GM10248 (cell line): ENCODE measurements at regions of chr20 and their contacts with region 1.

Region 1: DNA sequence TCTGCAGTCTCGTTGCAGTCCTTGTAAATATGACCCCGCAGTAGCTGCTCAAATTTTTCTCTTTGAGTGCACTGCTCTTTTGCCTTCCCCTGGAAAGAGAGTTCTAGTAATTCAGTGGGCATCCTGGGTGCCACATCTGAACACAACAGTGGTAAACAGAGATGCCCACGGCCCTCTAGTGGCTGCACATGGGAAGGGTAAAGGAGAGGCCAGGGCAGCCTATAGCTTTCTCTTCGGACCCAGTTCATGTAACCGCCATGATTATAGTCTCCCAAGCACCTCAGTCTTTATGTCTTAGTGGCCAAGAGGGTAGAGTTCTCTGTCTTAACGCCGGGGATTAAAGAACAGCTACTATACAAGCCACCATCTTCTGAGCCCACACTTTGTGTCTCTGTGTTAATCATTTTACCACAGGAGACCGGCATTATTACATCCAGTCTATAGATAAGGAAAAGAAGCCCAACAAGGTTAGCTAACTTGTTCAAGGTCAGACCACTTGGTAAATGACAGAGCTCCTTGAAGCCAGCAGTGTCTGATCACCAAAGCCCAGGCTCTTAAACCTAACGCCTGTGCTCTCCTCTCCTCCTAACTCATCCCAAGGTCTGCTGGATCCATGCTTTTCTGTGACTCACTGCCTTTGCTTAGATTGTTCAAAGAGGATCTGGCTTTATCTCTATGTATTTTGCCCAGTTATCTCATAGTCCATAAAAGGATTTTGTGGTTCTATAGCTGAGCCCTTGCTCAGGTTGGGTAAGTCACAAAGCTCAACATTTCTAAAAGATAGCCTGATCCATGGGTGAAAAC is 81.8 kb downstream of the ISM1 start:
- DNase-seq: peak; percentile 50
- CTCF ChIP-seq: peak; percentile 54

Region 2: DNA sequence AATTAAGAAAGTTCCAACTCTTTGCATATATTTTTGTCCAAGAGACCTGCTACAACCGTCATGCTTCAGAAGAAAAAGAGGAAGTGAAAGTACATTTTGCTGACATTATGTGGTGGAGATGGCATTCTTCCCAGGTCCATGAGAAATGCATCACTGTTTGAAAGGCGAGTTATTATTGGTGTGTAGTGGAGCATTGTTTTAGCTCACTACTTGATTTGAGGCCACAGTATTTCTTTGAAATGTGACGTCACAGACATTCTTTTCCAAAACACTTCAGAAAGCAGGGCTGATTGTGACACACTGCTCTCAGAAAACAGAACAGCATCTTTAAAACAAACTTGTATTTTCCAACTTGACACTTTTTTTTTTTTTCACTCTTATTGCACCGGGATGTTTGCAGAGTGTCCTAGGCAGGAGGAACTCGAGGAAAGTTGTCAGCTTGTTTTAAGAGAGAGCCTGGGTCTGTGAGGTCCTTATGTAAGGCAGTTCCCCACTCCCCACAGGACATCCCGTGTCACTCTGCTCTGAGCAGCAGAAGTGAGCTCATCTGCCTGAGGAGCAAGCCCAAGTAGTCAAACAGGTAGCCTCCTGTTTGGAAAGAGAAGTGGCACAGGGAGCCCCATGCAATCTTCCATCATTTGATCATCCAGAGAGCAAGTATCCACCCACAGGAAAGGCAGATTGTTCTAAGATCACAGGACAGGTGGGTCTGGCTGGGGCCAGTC is 293.0 kb before region 1 on chr20:
- CTCF ChIA-PET with region 1: no interaction called
- POLR2A ChIA-PET with region 1: no interaction called
- DNase-seq: peak; percentile 36
- CTCF ChIP-seq: no peak

Region 3: GRCh38 chr20:13231031-13231752 is 71.7 kb before region 1 on chr20:
- CTCF ChIA-PET with region 1: no interaction called
- POLR2A ChIA-PET with region 1: no interaction called
- DNase-seq: no peak
- CTCF ChIP-seq: no peak

Region 4: GRCh38 chr20:13292201-13292885 is 10.5 kb before region 1 on chr20:
- CTCF ChIA-PET with region 1: interaction called, 10 read pairs
- POLR2A ChIA-PET with region 1: no interaction called
- DNase-seq: no peak
- CTCF ChIP-seq: no peak

Region 5: GRCh38 chr20:13341781-13342277 is 39.0 kb after region 1 on chr20:
- CTCF ChIA-PET with region 1: no interaction called
- POLR2A ChIA-PET with region 1: no interaction called
- DNase-seq: no peak
- CTCF ChIP-seq: no peak